ENCODE measurements at regions of chr3 and their contacts with region 1.

Region 1: DNA sequence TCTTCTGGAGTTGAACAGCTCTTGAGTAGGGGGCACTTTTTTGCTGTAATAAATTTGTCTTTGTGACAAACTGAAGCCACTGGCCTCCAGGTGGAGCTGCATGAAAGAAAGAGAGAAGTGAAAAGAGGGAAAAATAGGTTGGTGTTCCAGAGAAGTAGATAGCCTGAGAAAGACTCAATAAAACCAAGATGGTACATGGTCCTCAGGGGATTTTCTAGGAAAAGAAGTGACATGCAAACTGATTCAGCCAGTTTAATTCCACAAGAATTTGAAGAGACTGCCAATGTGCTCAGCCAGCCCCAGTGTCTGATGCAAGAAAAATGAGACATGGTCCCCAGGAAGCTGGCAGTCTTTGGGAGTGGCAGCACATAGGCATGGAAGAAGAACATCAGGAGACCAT is 152.7 kb downstream of the CD47 start:
- DNase-seq: peak; percentile 14
- H3K4me3 ChIP-seq: no peak overlapping the region
- H3K27ac ChIP-seq: no peak overlapping the region
- H3K4me1 ChIP-seq: no peaks in the 10 kb centered on the region
- H3K27me3 ChIP-seq: no peaks in the 10 kb centered on the region
- CTCF ChIP-seq: peak in 3 of 4 experiments; percentile 36 to 69 (median 58)
- POLR2A ChIP-seq: no peak

Region 2: DNA sequence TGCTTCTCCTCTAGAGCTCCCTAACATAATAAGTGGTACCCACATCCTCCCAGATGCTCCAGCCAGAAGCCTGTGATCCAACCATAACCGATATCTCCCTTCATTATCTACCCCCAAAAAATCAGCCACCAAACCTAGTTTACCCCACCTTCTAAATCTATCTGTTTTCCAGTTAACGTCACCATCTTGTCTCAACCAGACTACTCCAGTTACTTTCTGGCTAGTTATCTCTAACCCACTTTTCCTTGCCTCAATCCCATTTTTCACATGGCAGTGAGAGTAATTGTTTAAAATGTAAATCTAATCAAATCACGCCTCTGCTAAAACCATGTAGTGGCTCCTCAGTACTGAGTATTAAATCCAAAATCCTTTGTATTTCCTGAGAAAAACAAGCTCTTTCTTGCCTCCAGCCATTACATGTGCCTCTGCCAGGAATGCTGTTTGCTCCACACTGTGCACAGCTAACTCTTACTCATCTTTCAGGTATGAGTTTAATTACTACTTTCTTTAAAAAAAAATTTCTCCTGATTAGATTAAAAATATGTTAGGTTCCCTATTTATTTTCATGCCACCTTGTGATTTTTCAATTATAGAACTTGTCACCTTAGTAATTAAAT is 545.5 kb before region 1 on chr3:
- intact Hi-C with region 1: no loop called
- DNase-seq: no peak
- H3K4me3 ChIP-seq: no peak overlapping the region
- H3K27ac ChIP-seq: no peak overlapping the region
- H3K4me1 ChIP-seq: no peaks in the 10 kb centered on the region
- H3K27me3 ChIP-seq: no peaks in the 10 kb centered on the region
- CTCF ChIP-seq: no peak
- POLR2A ChIP-seq: no peak

Region 3: GRCh38 chr3:108221911-108222852 is 284.0 kb after region 1 on chr3 and contains the start of gene IFT57:
- intact Hi-C with region 1: loop called (anchors 5 kb)
- DNase-seq: peak; percentile 98
- H3K4me3 ChIP-seq: peak within 1 kb of the TSS; percentile 60 to 76
- H3K27ac ChIP-seq: peak within 1 kb of the TSS; percentile 82 to 84
- H3K4me1 ChIP-seq: peaks cover 8% of the 10 kb centered on the region
- H3K27me3 ChIP-seq: no peaks in the 10 kb centered on the region
- CTCF ChIP-seq: peak in 1 of 4 experiments; percentile 9
- POLR2A ChIP-seq: peak; percentile 78
- total RNA-seq, gene IFT57: 88.8 to 163 TPM

Region 4: GRCh38 chr3:108406661-108407206 is 468.6 kb after region 1 on chr3:
- intact Hi-C with region 1: loop called (anchors 5 kb)
- DNase-seq: peak; percentile 81
- H3K4me3 ChIP-seq: no peak overlapping the region
- H3K27ac ChIP-seq: peak overlapping the region; percentile 68 to 79
- H3K4me1 ChIP-seq: peaks cover 35% of the 10 kb centered on the region
- H3K27me3 ChIP-seq: no peaks in the 10 kb centered on the region
- CTCF ChIP-seq: peak in 3 of 4 experiments; percentile 75 to 91 (median 87)
- POLR2A ChIP-seq: no peak

Region 5: DNA sequence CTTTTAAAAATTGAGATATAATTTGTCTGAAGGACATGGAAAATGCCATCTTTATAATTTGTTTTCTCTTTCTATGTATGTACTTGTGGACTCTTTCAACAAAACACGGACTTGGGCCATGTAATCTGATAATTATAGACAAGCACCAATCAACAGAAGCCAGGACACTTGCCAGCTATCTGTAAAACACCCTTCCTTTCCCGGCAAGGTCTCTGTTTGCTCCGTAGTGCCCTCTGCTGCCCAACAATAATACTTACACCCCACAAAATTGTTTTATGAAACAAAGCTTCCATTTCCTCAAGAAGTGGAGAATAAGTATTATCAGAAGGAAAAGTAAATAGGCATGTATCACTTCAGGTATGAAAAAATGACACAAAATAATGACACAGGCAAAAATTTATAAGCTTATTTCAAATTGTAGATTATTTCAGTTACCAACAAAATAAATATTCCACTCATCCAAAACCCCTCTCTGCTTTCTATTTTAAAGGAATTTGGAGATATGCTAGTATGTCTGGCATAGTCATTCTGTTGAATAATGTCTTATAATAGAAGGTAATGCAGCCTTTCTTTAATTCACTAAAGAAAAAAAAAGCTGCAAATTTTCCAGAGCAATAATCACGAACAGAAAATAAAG is 539.5 kb after region 1 on chr3:
- intact Hi-C with region 1: loop called (anchors 5 kb)
- DNase-seq: peak; percentile 40
- H3K4me3 ChIP-seq: no peak overlapping the region
- H3K27ac ChIP-seq: no peak overlapping the region
- H3K4me1 ChIP-seq: no peaks in the 10 kb centered on the region
- H3K27me3 ChIP-seq: no peaks in the 10 kb centered on the region
- CTCF ChIP-seq: peak; percentile 46 to 76 (median 70)
- POLR2A ChIP-seq: no peak

Measured in prostate gland (tissue), 2 donors.